Calu3 (cell line): ENCODE measurements at regions of chr7 and their contacts with region 1.

Region 1: DNA sequence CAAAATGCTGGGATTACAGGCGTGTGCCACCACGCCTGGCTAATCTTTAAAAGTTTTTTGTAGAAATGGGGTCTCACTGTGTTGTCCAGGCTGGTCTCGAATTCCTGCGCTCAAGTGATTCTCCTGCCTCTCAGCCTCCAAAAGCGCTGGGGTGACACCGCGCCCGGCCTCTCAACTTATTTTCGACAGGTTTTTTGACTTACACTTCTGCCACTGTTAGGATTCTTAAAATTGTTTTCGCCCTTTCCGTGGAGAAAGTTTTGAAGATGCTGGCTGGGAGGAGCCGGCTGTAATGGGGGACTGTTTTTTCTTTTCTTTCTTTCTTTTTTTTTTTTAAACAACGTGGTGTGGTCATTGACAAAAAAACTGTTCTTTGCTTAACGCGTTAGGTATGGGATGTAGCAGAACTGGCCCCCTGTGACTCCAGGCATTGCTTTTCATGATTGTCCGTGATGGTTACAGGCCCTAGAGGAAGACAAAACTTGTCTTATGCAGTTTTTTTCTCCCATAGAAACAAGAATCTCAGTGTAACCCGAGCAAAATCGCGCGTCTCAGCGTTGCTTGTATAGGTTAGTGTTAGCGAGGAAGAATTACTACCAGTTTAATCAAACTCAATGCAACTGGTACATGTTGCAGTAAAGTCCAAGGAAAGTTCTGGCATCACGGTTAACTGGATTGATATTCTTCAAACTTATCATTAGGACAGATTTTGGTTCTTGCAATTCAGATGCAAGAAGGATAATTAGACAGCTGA is 72.2 kb downstream of the DAGLB start:
- DNase-seq: no peak
- H3K4me3 Mint-ChIP-seq: peak overlapping the region; percentile 80
- H3K27ac Mint-ChIP-seq: peak overlapping the region; percentile 75
- H3K4me1 Mint-ChIP-seq: peaks cover 33% of the 10 kb centered on the region
- H3K27me3 Mint-ChIP-seq: no peaks in the 10 kb centered on the region
- CTCF ChIP-seq: no peak

Region 2: GRCh38 chr7:6392706-6393666 is 17.5 kb after region 1 on chr7:
- CTCF ChIA-PET with region 1: interaction called, 5 read pairs
- intact Hi-C with region 1: loop called (anchors 2 kb)
- DNase-seq: peak; percentile 96
- H3K4me3 Mint-ChIP-seq: peak overlapping the region; percentile 62
- H3K27ac Mint-ChIP-seq: peak overlapping the region; percentile 89
- H3K4me1 Mint-ChIP-seq: peaks cover 78% of the 10 kb centered on the region
- H3K27me3 Mint-ChIP-seq: no peaks in the 10 kb centered on the region
- CTCF ChIP-seq: no peak

Region 3: GRCh38 chr7:7114706-7115295 is 739.3 kb after region 1 on chr7:
- CTCF ChIA-PET with region 1: no interaction called
- intact Hi-C with region 1: no loop called
- DNase-seq: peak; percentile 10
- H3K4me3 Mint-ChIP-seq: no peak overlapping the region
- H3K27ac Mint-ChIP-seq: no peak overlapping the region
- H3K4me1 Mint-ChIP-seq: peaks cover 10% of the 10 kb centered on the region
- H3K27me3 Mint-ChIP-seq: no peaks in the 10 kb centered on the region
- CTCF ChIP-seq: no peak